ENCODE measurements at regions of chr12 and their contacts with region 1.

Region 1: GRCh38 chr12:47207340-47207717 is 127.6 kb upstream of the AMIGO2 start:
- DNase-seq: peak in 8 of 10 donors; percentile 18 to 70 (median 40)
- ATAC-seq: peak; percentile 41 to 59
- H3K4me3 Mint-ChIP-seq: peak overlapping the region; percentile 62 to 98 (median 86)
- H3K27ac Mint-ChIP-seq: peak overlapping the region; percentile 83 to 99 (median 91)
- H3K4me1 Mint-ChIP-seq: peaks cover 45 to 87% (median 83%) of the 10 kb centered on the region in 4 donors
- H3K27me3 Mint-ChIP-seq: no peaks in the 10 kb centered on the region

Region 2: DNA sequence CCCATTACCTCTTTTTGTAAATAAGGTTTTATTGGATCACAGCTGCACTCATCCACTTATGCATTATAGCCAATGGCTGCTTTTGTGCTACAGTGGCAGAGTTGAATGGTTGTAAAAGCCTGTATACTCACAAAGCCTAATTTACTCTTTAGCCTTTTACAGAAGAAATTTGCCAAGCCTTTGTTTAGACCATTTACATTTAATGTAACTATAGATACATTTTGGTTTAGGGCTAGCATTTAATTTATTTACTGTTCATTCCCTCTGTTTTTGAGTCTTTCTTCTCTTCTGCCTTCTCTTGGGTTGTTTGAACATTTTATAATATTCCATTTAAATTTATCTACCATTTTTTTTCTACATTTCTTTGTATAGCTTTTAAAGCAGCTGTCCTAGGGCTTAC is 89.5 kb after region 1 on chr12:
- POLR2A ChIA-PET with region 1: interaction called, 11 read pairs
- DNase-seq: no peak
- ATAC-seq: no peak
- H3K4me3 Mint-ChIP-seq: no peak overlapping the region
- H3K27ac Mint-ChIP-seq: peak overlapping the region in 3 of 10 donors; percentile 15 to 72 (median 29)
- H3K4me1 Mint-ChIP-seq: peaks cover 34 to 54% (median 52%) of the 10 kb centered on the region in 4 donors
- H3K27me3 Mint-ChIP-seq: no peaks in the 10 kb centered on the region